Endothelial cell of umbilical vein (primary cell): ENCODE measurements at regions of chr17 and their contacts with region 1.

Region 1: GRCh38 chr17:32997753-32998632 is 6.3 kb downstream of the SPACA3 start:
- DNase-seq: peak; percentile 67
- H3K4me3 ChIP-seq: no peak overlapping the region
- H3K27ac ChIP-seq: no peak overlapping the region
- H3K4me1 ChIP-seq: no peaks in the 10 kb centered on the region
- H3K27me3 ChIP-seq: no peaks in the 10 kb centered on the region
- CTCF ChIP-seq: peak; percentile 86 to 95
- POLR2A ChIP-seq: no peak

Region 2: GRCh38 chr17:32659419-32659842 is 338.6 kb before region 1 on chr17:
- CTCF ChIA-PET with region 1: interaction called, 10 read pairs
- POLR2A ChIA-PET with region 1: no interaction called
- dilution Hi-C with region 1: no loop called
- intact Hi-C with region 1: loop called (anchors 5 kb)
- DNase-seq: peak; percentile 84
- H3K4me3 ChIP-seq: no peak overlapping the region
- H3K27ac ChIP-seq: no peak overlapping the region
- H3K4me1 ChIP-seq: no peaks in the 10 kb centered on the region
- H3K27me3 ChIP-seq: no peaks in the 10 kb centered on the region
- CTCF ChIP-seq: peak; percentile 85 to 92
- POLR2A ChIP-seq: no peak

Region 3: GRCh38 chr17:32917842-32918241 is 80.2 kb before region 1 on chr17:
- CTCF ChIA-PET with region 1: no interaction called
- POLR2A ChIA-PET with region 1: no interaction called
- dilution Hi-C with region 1: no loop called
- intact Hi-C with region 1: no loop called
- DNase-seq: no peak
- H3K4me3 ChIP-seq: no peak overlapping the region
- H3K27ac ChIP-seq: no peak overlapping the region
- H3K4me1 ChIP-seq: no peaks in the 10 kb centered on the region
- H3K27me3 ChIP-seq: peaks cover 0 to 8% of the 10 kb centered on the region in 2 experiments
- CTCF ChIP-seq: no peak
- POLR2A ChIP-seq: no peak

Region 4: DNA sequence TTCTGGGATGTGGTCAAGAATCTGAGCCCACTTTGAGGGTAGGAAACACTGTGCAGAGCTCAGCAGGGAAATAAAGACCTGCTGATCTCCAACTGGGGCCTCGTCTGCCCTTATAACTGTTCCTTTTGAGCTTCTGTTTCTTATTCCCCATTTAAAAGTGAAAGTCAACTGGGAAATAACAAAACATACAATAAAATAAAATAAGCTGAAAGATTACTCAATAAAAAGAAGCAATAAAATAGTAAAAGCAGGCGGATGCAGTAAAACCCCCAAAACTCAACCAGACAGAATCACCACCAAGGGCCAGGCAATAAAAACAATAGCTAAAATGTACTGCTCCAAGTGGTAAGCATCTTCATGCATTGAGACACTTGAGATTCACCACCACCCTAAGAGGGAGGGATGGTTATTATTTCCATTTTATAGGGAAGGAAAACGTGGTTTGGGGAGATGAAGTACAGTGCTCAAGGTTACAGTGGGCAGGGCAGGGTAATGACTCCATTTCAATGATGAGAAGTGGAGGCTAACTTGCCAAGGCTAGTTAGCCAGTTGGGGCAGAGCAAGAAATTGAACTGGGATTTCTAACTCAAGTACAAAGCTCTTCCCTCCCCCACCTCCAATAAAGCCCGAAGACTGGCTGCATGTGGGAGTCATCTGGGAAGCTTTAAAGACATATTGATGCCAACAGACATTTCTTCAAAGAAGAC is 12.8 kb before region 1 on chr17:
- CTCF ChIA-PET with region 1: interaction called, 10 read pairs
- POLR2A ChIA-PET with region 1: no interaction called
- dilution Hi-C with region 1: no loop called
- intact Hi-C with region 1: no loop called
- DNase-seq: no peak
- H3K4me3 ChIP-seq: no peak overlapping the region
- H3K27ac ChIP-seq: no peak overlapping the region
- H3K4me1 ChIP-seq: no peaks in the 10 kb centered on the region
- H3K27me3 ChIP-seq: no peaks in the 10 kb centered on the region
- CTCF ChIP-seq: no peak
- POLR2A ChIP-seq: no peak

Region 5: GRCh38 chr17:33019616-33019890 is 21.6 kb after region 1 on chr17:
- CTCF ChIA-PET with region 1: interaction called, 10 read pairs
- POLR2A ChIA-PET with region 1: no interaction called
- dilution Hi-C with region 1: no loop called
- intact Hi-C with region 1: no loop called
- DNase-seq: no peak
- H3K4me3 ChIP-seq: no peak overlapping the region
- H3K27ac ChIP-seq: no peak overlapping the region
- H3K4me1 ChIP-seq: no peaks in the 10 kb centered on the region
- H3K27me3 ChIP-seq: no peaks in the 10 kb centered on the region
- CTCF ChIP-seq: no peak
- POLR2A ChIP-seq: no peak

Region 6: GRCh38 chr17:33284022-33284421 is 286.0 kb after region 1 on chr17:
- CTCF ChIA-PET with region 1: no interaction called
- POLR2A ChIA-PET with region 1: no interaction called
- dilution Hi-C with region 1: no loop called
- intact Hi-C with region 1: no loop called
- DNase-seq: peak; percentile 84
- H3K4me3 ChIP-seq: no peak overlapping the region
- H3K27ac ChIP-seq: peak overlapping the region; percentile 45
- H3K4me1 ChIP-seq: peaks cover 18% of the 10 kb centered on the region
- H3K27me3 ChIP-seq: peaks cover 7 to 10% of the 10 kb centered on the region in 2 experiments
- CTCF ChIP-seq: no peak
- POLR2A ChIP-seq: no peak

Region 7: DNA sequence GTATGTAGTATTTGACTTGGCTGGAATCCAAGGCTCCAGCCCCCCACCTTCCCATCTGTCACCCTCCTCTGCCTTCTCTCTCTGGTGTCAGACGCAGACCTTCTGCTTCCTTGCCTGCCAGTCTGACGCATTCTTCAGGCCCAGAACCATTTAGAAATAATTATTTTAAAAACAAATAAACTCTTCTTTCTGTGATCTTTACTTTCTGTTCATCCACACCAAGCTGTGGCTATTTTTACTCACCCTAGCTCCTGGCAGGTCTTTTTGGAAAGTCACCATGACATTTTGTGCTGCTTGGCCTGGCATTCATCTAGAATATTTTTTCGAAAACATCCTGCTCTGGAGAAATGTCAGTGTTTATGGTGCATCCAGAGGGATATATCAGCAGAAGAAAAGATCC is 625.8 kb after region 1 on chr17:
- CTCF ChIA-PET with region 1: no interaction called
- POLR2A ChIA-PET with region 1: no interaction called
- dilution Hi-C with region 1: no loop called
- intact Hi-C with region 1: no loop called
- DNase-seq: no peak
- H3K4me3 ChIP-seq: no peak overlapping the region
- H3K27ac ChIP-seq: no peak overlapping the region
- H3K4me1 ChIP-seq: no peaks in the 10 kb centered on the region
- H3K27me3 ChIP-seq: no peaks in the 10 kb centered on the region
- CTCF ChIP-seq: no peak
- POLR2A ChIP-seq: no peak